Right lobe of liver (tissue), 6 donors: ENCODE measurements at regions of chr4 and their contacts with region 1.

Region 1: DNA sequence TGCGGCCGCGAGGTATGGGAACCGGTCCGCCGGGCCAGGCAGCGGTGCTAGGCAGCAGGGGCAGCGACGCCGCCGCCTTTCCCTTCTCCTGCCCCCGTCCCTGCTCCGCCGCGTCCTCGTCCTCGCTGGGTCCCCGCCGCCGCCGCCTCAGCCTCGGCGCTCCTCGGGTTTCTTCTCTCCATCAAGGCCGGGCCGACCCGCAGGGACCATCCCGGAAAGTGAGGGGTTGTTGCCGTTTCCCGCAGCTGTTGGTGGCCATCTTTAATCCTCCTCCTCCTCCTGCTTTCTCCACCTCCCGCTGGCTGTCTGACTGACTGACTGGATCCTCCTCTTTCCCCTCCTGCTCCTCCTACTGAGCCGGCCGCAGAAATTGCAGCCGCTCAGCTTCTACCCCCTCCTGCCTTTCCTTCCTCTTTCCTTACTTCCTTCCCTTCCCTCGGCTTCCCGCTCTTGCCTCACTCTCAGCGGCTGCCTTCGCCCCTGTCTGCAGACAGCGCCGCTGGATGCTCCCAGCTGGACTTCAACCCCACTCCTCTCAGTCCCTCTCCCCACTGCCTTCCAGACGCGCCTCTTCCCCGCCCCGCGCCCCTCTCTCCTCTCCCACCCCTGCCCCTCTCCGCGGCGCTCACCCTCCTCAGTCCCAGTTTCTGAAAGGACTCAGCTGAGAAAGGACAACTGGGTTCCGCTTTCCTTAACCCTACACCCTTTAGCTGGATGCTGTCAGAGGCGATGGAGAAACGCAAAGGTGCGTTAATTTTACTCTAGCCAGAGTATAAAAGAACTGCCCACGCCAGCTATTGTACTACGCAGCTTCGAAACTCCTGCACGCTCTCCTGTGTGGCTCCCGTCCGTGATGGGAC is at the start of gene WDFY3:
- DNase-seq: peak; percentile 84 to 90 (median 85)
- ATAC-seq: peak; percentile 92 to 97 (median 93)
- H3K4me3 ChIP-seq: peak within 1 kb of the TSS; percentile 75 to 78 (median 78)
- H3K27ac ChIP-seq: peak within 1 kb of the TSS; percentile 68 to 90 (median 87)
- H3K4me1 ChIP-seq: peaks cover 0 to 15% (median 4%) of the 10 kb centered on the region in 4 donors
- H3K27me3 ChIP-seq: no peaks in the 10 kb centered on the region
- CTCF ChIP-seq: peak in 2 of 4 donors; percentile 13 to 18
- POLR2A ChIP-seq: peak; percentile 64
- total RNA-seq, gene WDFY3: 18.8 to 36.5 (median 25.9) TPM

Region 2: GRCh38 chr4:84750253-84750959 is 216.2 kb before region 1 on chr4:
- intact Hi-C with region 1: loop called (anchors 5 kb)
- DNase-seq: no peak
- ATAC-seq: peak; percentile 82 to 89 (median 86)
- H3K4me3 ChIP-seq: no peak overlapping the region
- H3K27ac ChIP-seq: no peak overlapping the region
- H3K4me1 ChIP-seq: no peaks in the 10 kb centered on the region
- H3K27me3 ChIP-seq: no peaks in the 10 kb centered on the region
- CTCF ChIP-seq: peak; percentile 52 to 65 (median 58)
- POLR2A ChIP-seq: no peak